ENCODE measurements at regions of chr2 and their contacts with region 1.

Region 1: DNA sequence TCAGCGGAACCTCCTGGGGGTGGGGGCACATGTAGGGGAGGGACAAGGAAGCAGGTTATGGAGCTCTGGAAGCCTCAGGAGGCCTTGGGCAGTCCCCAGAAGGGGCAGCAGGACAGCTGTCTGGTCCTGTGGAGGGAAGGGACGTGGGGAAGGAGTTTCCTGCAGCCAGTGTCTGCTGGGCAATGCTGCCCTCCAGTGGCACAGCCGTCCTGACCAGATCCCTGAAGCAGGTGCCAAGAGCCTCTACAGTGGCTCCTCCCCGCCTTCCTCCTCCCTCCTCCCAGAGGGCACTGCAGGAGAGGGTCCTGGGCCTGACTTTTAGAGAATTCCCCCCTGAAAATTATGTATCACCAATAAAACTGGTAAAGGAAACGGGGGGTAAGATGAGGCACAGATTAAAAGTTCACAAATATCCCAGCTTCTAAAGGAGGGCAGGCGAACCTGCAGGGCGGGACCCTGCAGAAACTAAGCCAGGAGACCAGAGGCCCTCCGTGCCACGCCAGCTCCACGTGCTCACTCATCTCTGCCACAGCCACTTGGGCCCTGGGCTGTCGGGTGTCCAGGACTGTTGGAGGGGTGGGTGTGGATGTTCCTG is 258.5 kb downstream of the TWIST2 start:
- DNase-seq: peak; percentile 18
- ATAC-seq: peak; percentile 92
- H3K4me3 ChIP-seq: no peak overlapping the region
- H3K27ac ChIP-seq: no peak overlapping the region
- H3K4me1 ChIP-seq: peaks cover 0 to 6% of the 10 kb centered on the region in 2 experiments; a peak in 1 of 4 replicates
- H3K27me3 ChIP-seq: no peaks in the 10 kb centered on the region
- CTCF ChIP-seq: peak; percentile 68 to 71 (median 68)
- POLR2A ChIP-seq: no peak
- RAD21 ChIP-seq: peak; percentile 84

Region 2: DNA sequence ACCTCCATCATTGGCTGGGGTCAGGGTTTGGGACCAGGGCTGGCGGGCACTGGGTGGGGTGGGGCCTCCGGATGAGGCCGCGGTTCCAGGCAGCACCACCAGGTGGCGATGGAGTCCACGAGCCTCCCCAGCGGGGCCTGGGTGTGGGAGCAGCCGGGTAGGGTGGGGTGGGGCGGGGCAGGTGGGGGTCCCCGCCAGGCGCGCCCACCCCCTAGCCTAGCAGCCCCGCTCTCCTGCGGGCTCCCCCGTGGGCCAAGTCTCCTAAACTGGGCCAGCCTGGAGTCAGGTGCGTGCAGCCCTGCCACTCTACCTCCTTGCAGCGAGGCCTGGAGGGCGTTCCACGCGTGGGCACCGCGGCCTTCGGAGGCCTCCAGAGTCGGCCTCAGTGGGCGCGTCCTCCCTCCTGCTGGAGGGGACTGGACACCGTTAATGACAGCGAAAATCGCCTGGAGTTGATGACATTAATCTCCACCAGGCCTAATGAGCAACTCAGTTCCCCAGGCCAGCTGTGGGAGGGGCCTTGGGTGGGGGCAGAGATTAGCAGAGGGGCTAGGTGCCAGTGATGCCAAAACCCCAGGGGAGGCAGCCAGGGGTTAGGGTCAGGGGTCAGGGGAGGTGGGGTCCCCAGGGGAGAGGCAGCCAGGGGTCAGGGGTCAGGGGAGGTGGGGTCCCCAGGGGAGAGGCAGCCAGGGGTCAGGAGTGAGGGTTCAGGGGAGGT is 70.9 kb before region 1 on chr2:
- CTCF ChIA-PET with region 1: no interaction called
- POLR2A ChIA-PET with region 1: no interaction called
- RAD21 ChIA-PET with region 1: no interaction called
- intact Hi-C with region 1: loop called (anchors 2 kb)
- DNase-seq: peak; percentile 4
- ATAC-seq: peak; percentile 98
- H3K4me3 ChIP-seq: no peak overlapping the region
- H3K27ac ChIP-seq: no peak overlapping the region
- H3K4me1 ChIP-seq: peaks cover 0 to 3% of the 10 kb centered on the region in 2 experiments; a peak in 1 of 4 replicates
- H3K27me3 ChIP-seq: peaks cover 22% of the 10 kb centered on the region
- CTCF ChIP-seq: peak; percentile 54 to 77 (median 71); a peak in 5 of 6 replicates
- POLR2A ChIP-seq: no peak
- RAD21 ChIP-seq: peak; percentile 79

Measured in HCT116 (cell line).